Activated CD4-positive, alpha-beta T cell treated with anti-CD3 and anti-CD28 coated beads for 36 hours (primary cell): ENCODE measurements at regions of chr12 and their contacts with region 1.

Region 1: GRCh38 chr12:106919910-106920544 is 35.7 kb upstream of the TMEM263 start:
- DNase-seq: peak; percentile 26
- ATAC-seq: no peak
- H3K4me3 Mint-ChIP-seq: no peak overlapping the region
- H3K27ac Mint-ChIP-seq: no peak overlapping the region
- H3K4me1 Mint-ChIP-seq: peaks cover 8% of the 10 kb centered on the region
- H3K27me3 Mint-ChIP-seq: peaks cover 5% of the 10 kb centered on the region

Region 2: GRCh38 chr12:106223485-106224354 is 696.3 kb before region 1 on chr12:
- CTCF ChIA-PET with region 1: no interaction called
- POLR2A ChIA-PET with region 1: no interaction called
- intact Hi-C with region 1: loop called in 1 of 2 experiments (anchors 1 kb)
- DNase-seq: peak; percentile 85
- ATAC-seq: peak; percentile 85
- H3K4me3 Mint-ChIP-seq: no peak overlapping the region
- H3K27ac Mint-ChIP-seq: no peak overlapping the region
- H3K4me1 Mint-ChIP-seq: peaks cover 14% of the 10 kb centered on the region
- H3K27me3 Mint-ChIP-seq: no peaks in the 10 kb centered on the region

Region 3: GRCh38 chr12:106386813-106387535 is 533.1 kb before region 1 on chr12:
- CTCF ChIA-PET with region 1: interaction called, 9 read pairs
- POLR2A ChIA-PET with region 1: no interaction called
- intact Hi-C with region 1: loop called (anchors 1 kb)
- DNase-seq: no peak
- ATAC-seq: no peak
- H3K4me3 Mint-ChIP-seq: no peak overlapping the region
- H3K27ac Mint-ChIP-seq: no peak overlapping the region
- H3K4me1 Mint-ChIP-seq: no peaks in the 10 kb centered on the region
- H3K27me3 Mint-ChIP-seq: no peaks in the 10 kb centered on the region

Region 4: DNA sequence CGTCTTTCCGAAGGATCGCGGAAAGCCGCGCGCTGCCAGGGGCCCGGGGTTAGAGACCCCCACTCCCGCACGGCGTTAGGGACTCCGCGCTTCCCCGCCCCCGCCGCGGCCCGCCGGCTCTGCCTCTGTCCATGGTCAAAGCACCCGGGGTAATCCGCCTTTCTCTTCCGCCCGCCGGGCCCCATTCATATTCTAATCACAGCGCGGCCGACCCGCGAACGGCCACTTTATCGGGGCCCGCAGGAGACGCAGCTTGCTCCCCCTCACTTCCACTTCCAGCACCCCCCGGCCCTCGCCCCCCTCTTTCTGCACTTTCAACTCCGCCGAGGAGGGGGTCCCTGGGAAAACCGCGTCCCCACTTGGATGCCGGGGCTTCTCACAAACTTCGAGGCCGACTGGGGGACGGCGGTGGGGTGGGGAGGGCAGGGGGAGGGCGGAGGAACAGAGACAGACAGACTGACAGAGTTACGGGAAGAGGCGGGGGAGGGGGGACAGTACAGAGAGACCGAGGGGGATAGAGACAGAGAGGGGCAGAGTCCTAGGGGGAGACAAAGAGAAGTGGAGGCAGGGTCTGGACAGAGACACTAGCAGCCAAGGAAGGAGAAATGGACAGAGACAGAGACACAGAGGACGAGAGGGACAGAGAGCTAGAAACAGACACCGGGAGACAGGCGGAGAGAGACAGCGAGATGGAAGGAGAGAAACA is 338.3 kb before region 1 on chr12:
- CTCF ChIA-PET with region 1: no interaction called
- POLR2A ChIA-PET with region 1: no interaction called
- intact Hi-C with region 1: loop called (anchors 5 to 10 kb)
- DNase-seq: peak; percentile 37
- ATAC-seq: no peak
- H3K4me3 Mint-ChIP-seq: peak overlapping the region; percentile 2
- H3K27ac Mint-ChIP-seq: no peak overlapping the region
- H3K4me1 Mint-ChIP-seq: peaks cover 29% of the 10 kb centered on the region
- H3K27me3 Mint-ChIP-seq: peaks cover 71% of the 10 kb centered on the region

Region 5: GRCh38 chr12:106682592-106683234 is 237.3 kb before region 1 on chr12:
- CTCF ChIA-PET with region 1: no interaction called
- POLR2A ChIA-PET with region 1: no interaction called
- intact Hi-C with region 1: loop called (anchors 5 to 10 kb)
- DNase-seq: no peak
- ATAC-seq: no peak
- H3K4me3 Mint-ChIP-seq: no peak overlapping the region
- H3K27ac Mint-ChIP-seq: no peak overlapping the region
- H3K4me1 Mint-ChIP-seq: no peaks in the 10 kb centered on the region
- H3K27me3 Mint-ChIP-seq: no peaks in the 10 kb centered on the region

Region 6: DNA sequence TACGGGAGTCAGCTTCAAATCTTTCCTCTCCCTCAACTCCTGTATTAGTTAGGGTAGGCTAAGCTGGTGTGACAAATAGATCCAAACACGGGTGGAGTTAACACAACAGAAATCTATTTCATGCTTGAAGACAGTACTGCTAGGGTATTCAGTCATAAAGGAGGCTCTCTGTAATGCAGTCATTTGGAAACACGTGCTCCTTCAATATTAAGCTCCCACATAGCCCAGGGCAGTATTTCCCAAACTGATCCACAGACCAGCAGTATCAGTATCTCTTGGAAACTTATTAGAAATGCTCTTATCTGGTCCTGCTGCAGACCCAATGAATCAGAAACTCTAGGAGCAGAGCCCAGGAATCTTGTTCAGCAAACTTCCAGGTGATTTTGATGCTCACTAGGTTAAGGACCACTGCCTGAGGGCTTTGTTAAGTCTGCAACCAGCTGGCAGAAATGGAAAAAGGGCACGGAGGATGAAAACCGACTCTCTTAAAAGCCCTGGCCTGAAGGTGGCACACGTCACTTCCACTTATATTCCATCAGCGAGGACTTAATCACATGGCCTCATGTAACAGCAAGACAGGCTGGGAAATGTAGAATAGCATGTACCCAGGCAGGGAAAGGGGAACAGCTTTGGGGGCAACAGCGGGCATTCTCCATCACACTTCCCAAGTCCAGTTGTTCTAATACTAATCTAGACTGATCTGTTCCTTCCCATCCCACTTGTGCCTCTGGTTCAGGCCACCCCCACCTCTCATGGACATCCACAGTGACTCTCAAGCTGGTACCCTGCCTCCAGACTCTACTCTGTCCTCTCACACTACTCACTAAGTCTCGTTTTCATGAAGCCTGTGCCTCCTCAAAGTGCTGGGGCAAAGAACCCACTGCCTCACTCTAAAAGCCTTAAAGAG is 183.7 kb before region 1 on chr12:
- CTCF ChIA-PET with region 1: interaction called, 4 read pairs
- POLR2A ChIA-PET with region 1: no interaction called
- intact Hi-C with region 1: loop called in 1 of 2 experiments (anchors 5 kb)
- DNase-seq: no peak
- ATAC-seq: peak; percentile 55
- H3K4me3 Mint-ChIP-seq: no peak overlapping the region
- H3K27ac Mint-ChIP-seq: no peak overlapping the region
- H3K4me1 Mint-ChIP-seq: no peaks in the 10 kb centered on the region
- H3K27me3 Mint-ChIP-seq: no peaks in the 10 kb centered on the region

Region 7: GRCh38 chr12:106907411-106907810 is 12.6 kb before region 1 on chr12:
- CTCF ChIA-PET with region 1: interaction called, 10 read pairs
- POLR2A ChIA-PET with region 1: interaction called, 4 read pairs
- intact Hi-C with region 1: no loop called
- DNase-seq: no peak
- ATAC-seq: no peak
- H3K4me3 Mint-ChIP-seq: no peak overlapping the region
- H3K27ac Mint-ChIP-seq: no peak overlapping the region
- H3K4me1 Mint-ChIP-seq: peaks cover 19% of the 10 kb centered on the region
- H3K27me3 Mint-ChIP-seq: peaks cover 25% of the 10 kb centered on the region